ENCODE measurements at regions of chr17 and their contacts with region 1.

Region 1: DNA sequence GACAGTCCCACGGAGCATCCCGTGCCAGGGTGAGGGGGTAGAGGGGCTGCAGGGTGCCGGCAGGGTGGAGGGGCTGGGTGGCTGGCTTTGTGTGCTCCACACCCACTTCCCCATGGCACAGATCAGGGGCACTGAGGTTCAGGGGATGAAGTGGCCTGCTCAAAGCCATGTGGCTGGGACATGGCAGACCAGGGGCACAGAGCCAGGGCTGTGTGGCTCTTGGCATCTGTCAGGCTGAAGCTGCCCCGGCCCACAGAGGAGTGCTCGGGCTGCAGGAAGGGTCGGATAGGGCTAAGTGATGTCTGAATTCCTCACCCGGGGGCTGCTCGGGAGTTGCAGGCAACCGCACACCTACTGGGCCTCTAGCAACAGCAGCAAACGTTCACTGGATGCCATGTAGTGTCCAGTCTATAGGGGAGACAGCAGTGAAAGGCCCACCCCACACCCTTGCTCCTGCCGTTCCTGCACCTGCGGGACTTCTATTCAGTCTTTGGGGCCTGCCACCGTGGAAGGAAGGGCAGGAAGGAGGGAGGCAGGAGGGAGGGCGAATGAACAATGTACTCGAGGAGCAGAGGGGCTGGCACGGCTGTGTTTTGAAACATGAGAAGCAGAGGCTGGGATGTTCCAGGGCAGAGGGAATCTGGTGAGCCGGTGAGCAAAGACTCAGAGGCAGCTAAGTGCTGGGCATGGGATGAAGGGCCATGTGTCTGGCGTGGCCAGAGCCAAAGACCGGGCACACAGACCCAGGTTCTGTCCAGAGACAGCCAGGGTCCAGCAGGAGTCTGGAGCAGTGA is 15.1 kb downstream of the SLC5A10 start:
- DNase-seq: peak in 1 of 5 donors; percentile 50
- ATAC-seq: peak in 2 of 4 donors; percentile 43 to 56
- H3K4me3 ChIP-seq: no peak overlapping the region
- H3K27ac ChIP-seq: no peak overlapping the region
- H3K4me1 ChIP-seq: no peaks in the 10 kb centered on the region
- H3K27me3 ChIP-seq: no peaks in the 10 kb centered on the region
- CTCF ChIP-seq: no peak
- POLR2A ChIP-seq: no peak

Region 2: GRCh38 chr17:18877104-18877503 is 89.9 kb before region 1 on chr17:
- intact Hi-C with region 1: no loop called
- DNase-seq: no peak
- ATAC-seq: no peak
- H3K4me3 ChIP-seq: no peak overlapping the region
- H3K27ac ChIP-seq: no peak overlapping the region
- H3K4me1 ChIP-seq: no peaks in the 10 kb centered on the region
- H3K27me3 ChIP-seq: no peaks in the 10 kb centered on the region
- CTCF ChIP-seq: no peak
- POLR2A ChIP-seq: no peak

Region 3: GRCh38 chr17:18938692-18939023 is 28.4 kb before region 1 on chr17:
- intact Hi-C with region 1: no loop called
- DNase-seq: no peak
- ATAC-seq: no peak
- H3K4me3 ChIP-seq: no peak overlapping the region
- H3K27ac ChIP-seq: no peak overlapping the region
- H3K4me1 ChIP-seq: no peaks in the 10 kb centered on the region
- H3K27me3 ChIP-seq: no peaks in the 10 kb centered on the region
- CTCF ChIP-seq: no peak
- POLR2A ChIP-seq: no peak

Region 4: GRCh38 chr17:18951941-18952842 is 14.8 kb before region 1 on chr17 and contains the start of gene SLC5A10:
- intact Hi-C with region 1: loop called in 1 of 10 experiments (anchors 1 kb)
- DNase-seq: no peak
- ATAC-seq: no peak
- H3K4me3 ChIP-seq: no peak within 1 kb of the TSS
- H3K27ac ChIP-seq: no peak within 1 kb of the TSS
- H3K4me1 ChIP-seq: peaks cover 0 to 18% (median 0%) of the 10 kb centered on the region in 12 donors
- H3K27me3 ChIP-seq: no peaks in the 10 kb centered on the region
- CTCF ChIP-seq: peak in 1 of 12 donors; percentile 12
- POLR2A ChIP-seq: no peak
- total RNA-seq, gene SLC5A10: 0.11 to 0.31 TPM in 2 of 9 donors, not detected in the others

Region 5: GRCh38 chr17:19024101-19025078 is 57.4 kb after region 1 on chr17:
- intact Hi-C with region 1: loop called in 1 of 10 experiments (anchors 5 kb)
- DNase-seq: peak in 3 of 5 donors; percentile 14 to 20 (median 20)
- ATAC-seq: no peak
- H3K4me3 ChIP-seq: no peak overlapping the region
- H3K27ac ChIP-seq: no peak overlapping the region
- H3K4me1 ChIP-seq: no peaks in the 10 kb centered on the region
- H3K27me3 ChIP-seq: no peaks in the 10 kb centered on the region
- CTCF ChIP-seq: no peak
- POLR2A ChIP-seq: no peak